HCT116 (cell line): ENCODE measurements at regions of chr1 and their contacts with region 1.

Region 1: GRCh38 chr1:234134878-234135277 is 230.4 kb downstream of the SLC35F3 start:
- DNase-seq: no peak
- ATAC-seq: no peak
- H3K4me3 ChIP-seq: no peak overlapping the region
- H3K27ac ChIP-seq: no peak overlapping the region
- H3K4me1 ChIP-seq: no peaks in the 10 kb centered on the region
- H3K27me3 ChIP-seq: no peaks in the 10 kb centered on the region
- CTCF ChIP-seq: no peak
- POLR2A ChIP-seq: no peak
- RAD21 ChIP-seq: no peak

Region 2: DNA sequence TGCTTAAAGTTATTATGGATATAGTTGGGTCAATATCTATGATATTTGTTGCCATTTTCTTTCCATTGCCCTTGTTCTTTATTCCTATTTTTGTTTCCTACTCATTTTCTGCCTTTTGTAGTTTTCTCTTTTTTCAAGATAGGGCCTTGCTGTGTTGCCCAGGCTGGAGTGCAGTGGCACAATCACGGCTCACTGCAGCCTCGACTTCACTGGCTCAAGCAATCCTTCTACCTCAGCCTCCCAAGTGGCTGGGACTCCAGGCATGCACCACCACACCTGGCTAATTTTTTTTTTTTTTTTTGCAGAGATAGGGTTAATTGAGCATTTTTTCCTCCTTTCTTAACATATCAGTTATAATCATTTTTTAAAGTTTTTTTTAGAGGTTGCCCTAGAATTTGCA is 901.0 kb after region 1 on chr1:
- CTCF ChIA-PET with region 1: no interaction called
- POLR2A ChIA-PET with region 1: no interaction called
- RAD21 ChIA-PET with region 1: no interaction called
- intact Hi-C with region 1: loop called (anchors 5 kb)
- DNase-seq: no peak
- ATAC-seq: no peak
- H3K4me3 ChIP-seq: no peak overlapping the region
- H3K27ac ChIP-seq: no peak overlapping the region
- H3K4me1 ChIP-seq: no peaks in the 10 kb centered on the region
- H3K27me3 ChIP-seq: no peaks in the 10 kb centered on the region
- CTCF ChIP-seq: no peak
- POLR2A ChIP-seq: no peak
- RAD21 ChIP-seq: no peak